Posterior vena cava (tissue), 2 donors: ENCODE measurements at regions of chr1 and their contacts with region 1.

Region 1: DNA sequence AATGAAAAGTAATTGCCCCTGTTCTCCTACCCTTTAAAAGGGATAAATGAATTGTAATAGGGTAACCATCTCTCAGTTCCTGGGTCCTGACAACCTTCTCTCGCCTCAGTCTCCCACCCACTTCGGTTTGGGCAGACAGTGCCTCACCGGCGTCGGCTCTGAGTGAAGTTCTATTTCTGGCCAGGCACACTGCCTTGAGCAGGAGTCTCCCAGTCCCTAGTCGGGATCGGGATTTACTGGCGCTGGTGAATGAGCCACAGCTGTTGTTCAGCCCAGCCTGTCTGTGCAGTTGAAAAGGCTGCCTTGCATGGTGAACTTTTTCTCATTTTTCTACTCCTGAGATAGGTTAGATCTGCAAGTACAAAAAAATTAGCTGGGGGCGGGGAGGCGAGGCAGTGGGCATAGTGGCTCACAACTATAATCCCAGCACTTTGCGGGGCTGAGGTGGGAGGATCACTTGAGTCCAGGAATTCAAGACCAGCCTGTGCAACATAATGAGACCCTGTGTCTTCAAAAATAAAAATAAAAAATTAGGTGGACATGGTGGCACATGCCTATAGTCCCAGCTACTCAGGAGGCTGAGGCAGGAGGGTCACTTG is 7.4 kb downstream of the PLEKHM2 start:
- DNase-seq: no peak

Region 2: DNA sequence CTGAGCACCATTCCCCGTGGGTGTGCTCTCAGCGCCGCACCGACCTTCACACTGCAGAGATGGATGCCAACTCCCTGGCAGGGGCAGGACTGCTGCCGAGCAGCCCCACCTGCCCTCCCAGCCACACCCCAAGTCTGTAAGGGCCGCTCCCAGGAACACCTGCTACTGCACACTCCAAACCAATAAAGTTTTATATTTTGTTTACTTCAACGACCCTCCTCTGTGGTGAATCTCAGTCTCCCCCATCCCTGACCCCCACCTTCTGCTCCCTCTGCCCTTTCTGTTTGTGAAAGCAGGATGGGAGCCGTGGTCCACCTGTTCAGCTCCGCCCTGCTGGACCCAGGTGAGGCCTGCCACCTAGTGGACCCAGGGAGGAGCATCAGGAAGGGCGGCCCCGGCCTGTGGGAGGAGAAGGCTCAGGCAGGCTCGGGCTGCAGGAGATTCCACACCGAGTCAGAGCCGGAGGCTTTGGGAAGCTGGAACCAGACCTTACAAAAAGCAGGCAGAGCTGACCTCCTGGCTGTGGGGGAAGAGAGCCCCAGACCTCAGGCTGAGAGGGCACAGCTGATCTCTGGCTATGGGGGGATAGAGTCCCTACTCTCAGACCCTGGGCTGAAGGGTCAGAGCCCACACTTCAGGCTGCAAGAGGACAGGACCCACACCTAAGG is 49.8 kb after region 1 on chr1:
- intact Hi-C with region 1: loop called in 1 of 2 experiments (anchors 1 kb)
- DNase-seq: peak; percentile 91